Activated CD4-positive, alpha-beta T cell treated with anti-CD3 and anti-CD28 coated beads for 36 hours (primary cell): ENCODE measurements at regions of chr10 and their contacts with region 1.

Region 1: DNA sequence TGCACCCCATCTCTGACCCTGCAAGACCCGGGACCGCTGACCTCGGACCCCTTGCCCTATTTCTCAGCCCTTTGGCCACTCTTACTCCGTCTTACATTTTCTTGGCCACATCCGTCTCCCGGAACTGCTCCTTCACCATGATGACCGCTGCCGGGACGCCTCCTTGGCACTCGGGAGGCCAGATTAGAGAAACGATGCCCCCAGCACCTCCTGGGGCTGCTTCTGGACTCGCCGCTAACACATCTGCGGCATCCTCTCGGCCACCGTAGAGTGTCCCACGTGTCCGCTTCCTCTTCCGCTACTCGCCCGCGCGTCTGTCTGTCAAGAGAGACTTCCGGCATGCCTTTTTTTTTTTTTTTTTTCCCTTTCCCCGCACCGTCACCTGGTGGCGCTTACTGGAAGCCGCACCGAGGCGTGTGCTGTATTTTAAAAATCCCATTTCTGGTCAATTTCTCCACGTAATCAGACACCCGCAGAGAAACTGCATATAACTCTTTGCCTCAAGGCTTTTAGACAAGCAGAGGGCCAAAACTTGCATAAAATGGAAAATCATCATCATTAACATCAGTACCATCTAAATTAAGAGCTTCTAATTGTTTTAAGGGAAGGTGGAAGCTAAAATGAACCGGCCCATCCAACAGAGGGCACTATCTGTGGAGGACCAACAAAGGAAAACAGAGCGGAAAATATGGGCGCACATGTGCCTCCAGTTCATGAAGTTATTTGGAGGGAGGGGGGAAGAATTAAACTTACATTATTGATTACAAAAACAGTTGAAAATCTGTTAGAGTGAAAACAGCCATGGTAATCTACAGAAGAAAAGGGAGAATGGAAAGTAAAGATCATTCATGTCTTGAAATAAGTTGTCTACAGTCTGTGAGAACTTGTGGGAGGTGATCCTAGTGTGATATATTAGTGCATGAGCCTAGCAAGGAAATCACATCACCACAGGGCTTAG is at the start of gene POLR3A:
- DNase-seq: peak; percentile 96
- ATAC-seq: peak; percentile 65
- H3K4me3 Mint-ChIP-seq: peak within 1 kb of the TSS; percentile 99
- H3K27ac Mint-ChIP-seq: peak within 1 kb of the TSS; percentile 98
- H3K4me1 Mint-ChIP-seq: peaks cover 34% of the 10 kb centered on the region
- H3K27me3 Mint-ChIP-seq: no peaks in the 10 kb centered on the region
- total RNA-seq, gene POLR3A: 18.3 to 19.3 TPM

Region 2: GRCh38 chr10:77846718-77847630 is 182.6 kb before region 1 on chr10:
- CTCF ChIA-PET with region 1: no interaction called
- POLR2A ChIA-PET with region 1: no interaction called
- intact Hi-C with region 1: loop called in 1 of 2 experiments (anchors 2 kb)
- DNase-seq: peak; percentile 79
- ATAC-seq: peak; percentile 89
- H3K4me3 Mint-ChIP-seq: no peak overlapping the region
- H3K27ac Mint-ChIP-seq: no peak overlapping the region
- H3K4me1 Mint-ChIP-seq: no peaks in the 10 kb centered on the region
- H3K27me3 Mint-ChIP-seq: no peaks in the 10 kb centered on the region

Region 3: GRCh38 chr10:78972947-78973900 is 943.7 kb after region 1 on chr10:
- CTCF ChIA-PET with region 1: no interaction called
- POLR2A ChIA-PET with region 1: no interaction called
- intact Hi-C with region 1: loop called in 1 of 2 experiments (anchors 1 kb)
- DNase-seq: peak; percentile 86
- ATAC-seq: peak; percentile 63
- H3K4me3 Mint-ChIP-seq: peak overlapping the region; percentile 58
- H3K27ac Mint-ChIP-seq: peak overlapping the region; percentile 77
- H3K4me1 Mint-ChIP-seq: peaks cover 32% of the 10 kb centered on the region
- H3K27me3 Mint-ChIP-seq: peaks cover 2% of the 10 kb centered on the region

Region 4: GRCh38 chr10:79322616-79323543 is 1293.3 kb after region 1 on chr10:
- CTCF ChIA-PET with region 1: no interaction called
- POLR2A ChIA-PET with region 1: no interaction called
- intact Hi-C with region 1: loop called in 1 of 2 experiments (anchors 5 kb)
- DNase-seq: peak; percentile 91
- ATAC-seq: peak; percentile 75
- H3K4me3 Mint-ChIP-seq: peak overlapping the region; percentile 46
- H3K27ac Mint-ChIP-seq: peak overlapping the region; percentile 94
- H3K4me1 Mint-ChIP-seq: peaks cover 70% of the 10 kb centered on the region
- H3K27me3 Mint-ChIP-seq: no peaks in the 10 kb centered on the region